Prostate gland (tissue), 2 donors: ENCODE measurements at regions of chr16 and their contacts with region 1.

Region 1: DNA sequence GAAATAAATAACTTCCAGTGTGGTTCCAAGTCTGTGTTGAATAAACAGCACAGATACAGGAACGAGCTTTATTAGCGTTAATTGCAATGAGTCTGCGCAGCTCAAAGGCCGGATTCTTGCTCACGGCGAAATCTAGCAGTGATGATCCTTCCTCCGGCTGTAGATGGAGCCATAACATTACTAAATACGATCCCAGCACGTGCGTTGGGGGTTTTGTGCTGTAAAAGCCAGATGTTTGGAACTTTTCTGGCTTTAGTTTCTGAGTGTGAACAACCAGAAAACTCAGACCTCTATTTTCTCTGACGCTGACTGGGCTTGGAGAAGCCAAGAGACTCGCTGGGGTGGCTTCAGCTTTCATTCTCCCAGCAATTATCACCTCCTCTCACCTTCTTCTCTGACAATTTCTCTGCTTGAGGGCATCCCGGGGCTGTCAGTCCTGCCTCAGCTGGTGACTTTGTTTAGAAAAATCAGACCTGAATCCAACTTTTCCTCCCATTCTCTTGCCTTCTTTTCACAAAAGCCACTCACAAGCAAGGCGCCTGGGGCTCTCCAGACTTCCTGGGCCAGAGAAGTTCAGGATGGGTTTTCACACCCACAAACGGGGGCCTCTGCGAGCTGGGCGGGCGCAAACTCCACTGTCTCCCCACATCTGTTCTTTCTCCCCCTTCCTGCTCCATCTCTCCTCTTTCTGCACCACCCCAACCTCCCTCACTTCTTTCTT is 47.1 kb upstream of the AKTIP start:
- DNase-seq: peak; percentile 80
- H3K4me3 ChIP-seq: no peak overlapping the region
- H3K27ac ChIP-seq: no peak overlapping the region
- H3K4me1 ChIP-seq: no peaks in the 10 kb centered on the region
- H3K27me3 ChIP-seq: no peaks in the 10 kb centered on the region
- CTCF ChIP-seq: peak in 3 of 4 experiments; percentile 73 to 81 (median 76)
- POLR2A ChIP-seq: no peak

Region 2: GRCh38 chr16:53257001-53257400 is 293.1 kb before region 1 on chr16:
- intact Hi-C with region 1: no loop called
- DNase-seq: no peak
- H3K4me3 ChIP-seq: no peak overlapping the region
- H3K27ac ChIP-seq: no peak overlapping the region
- H3K4me1 ChIP-seq: no peaks in the 10 kb centered on the region
- H3K27me3 ChIP-seq: no peaks in the 10 kb centered on the region
- CTCF ChIP-seq: no peak
- POLR2A ChIP-seq: no peak

Region 3: GRCh38 chr16:54277845-54278703 is 727.9 kb after region 1 on chr16:
- intact Hi-C with region 1: loop called (anchors 10 kb)
- DNase-seq: peak; percentile 60
- H3K4me3 ChIP-seq: no peak overlapping the region
- H3K27ac ChIP-seq: peak overlapping the region; percentile 63 to 75
- H3K4me1 ChIP-seq: no peaks in the 10 kb centered on the region
- H3K27me3 ChIP-seq: no peaks in the 10 kb centered on the region
- CTCF ChIP-seq: no peak
- POLR2A ChIP-seq: no peak

Region 4: DNA sequence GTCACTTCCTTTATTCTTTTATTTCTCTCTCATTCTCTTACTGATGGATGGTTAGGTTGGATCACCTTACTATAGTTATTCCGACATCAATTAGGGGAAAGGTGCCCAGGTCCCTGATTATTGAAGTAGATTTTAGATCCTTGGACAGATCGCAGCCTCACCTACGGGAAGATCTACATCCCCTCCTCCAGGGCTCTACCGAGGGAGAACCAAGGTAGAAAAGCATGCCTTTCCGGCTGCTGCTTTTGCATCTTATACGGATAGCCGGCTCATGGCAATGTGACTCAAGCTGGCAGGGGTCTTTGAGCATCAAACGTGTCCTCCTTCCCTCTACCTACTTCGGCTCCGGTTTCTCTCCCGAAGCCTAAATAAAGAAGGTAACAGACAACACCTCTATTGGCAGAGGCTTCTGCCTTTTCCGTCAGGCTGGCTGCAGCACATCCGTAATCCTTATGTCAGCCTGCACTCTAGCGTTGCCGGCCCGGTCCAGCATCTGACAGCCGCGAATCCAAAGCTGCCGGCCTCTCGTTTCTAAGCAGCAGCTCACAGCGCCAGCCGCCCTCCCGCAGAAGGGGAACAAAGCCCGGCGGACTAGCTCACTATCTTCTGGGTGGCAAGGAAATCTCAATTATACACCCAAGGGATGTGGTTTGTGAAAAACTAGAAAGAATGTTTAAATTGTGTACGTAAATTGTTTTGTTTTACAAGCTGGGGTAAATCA is 1820.8 kb after region 1 on chr16:
- intact Hi-C with region 1: loop called (anchors 5 kb)
- DNase-seq: peak; percentile 60
- H3K4me3 ChIP-seq: no peak overlapping the region
- H3K27ac ChIP-seq: no peak overlapping the region
- H3K4me1 ChIP-seq: no peaks in the 10 kb centered on the region
- H3K27me3 ChIP-seq: no peaks in the 10 kb centered on the region
- CTCF ChIP-seq: peak in 3 of 4 experiments; percentile 30 to 59 (median 48)
- POLR2A ChIP-seq: no peak